Astrocyte of the cerebellum (primary cell): ENCODE measurements at regions of chr4 and their contacts with region 1.

Region 1: GRCh38 chr4:23135792-23136645 is 443.3 kb downstream of the GBA3 start:
- DNase-seq: peak; percentile 59
- H3K4me3 ChIP-seq: no peak overlapping the region
- CTCF ChIP-seq: peak; percentile 87

Region 2: GRCh38 chr4:24419181-24420034 is 1283.4 kb after region 1 on chr4:
- in situ Hi-C with region 1: loop called (anchors 25 kb)
- DNase-seq: peak; percentile 71
- H3K4me3 ChIP-seq: no peak overlapping the region
- CTCF ChIP-seq: peak; percentile 91